Mucosa of descending colon (tissue), 3 donors: ENCODE measurements at regions of chr11 and their contacts with region 1.

Region 1: GRCh38 chr11:8092587-8093424 is 11.8 kb downstream of the TUB start:
- DNase-seq: peak in 2 of 3 donors; percentile 54 to 82
- ATAC-seq: peak; percentile 81
- H3K4me3 ChIP-seq: no peak overlapping the region
- H3K4me1 ChIP-seq: no peaks in the 10 kb centered on the region
- CTCF ChIP-seq: peak; percentile 36

Region 2: GRCh38 chr11:8018484-8019313 is 74.1 kb before region 1 on chr11:
- intact Hi-C with region 1: loop called in 1 of 2 experiments (anchors 5 kb)
- DNase-seq: peak; percentile 59 to 71 (median 66)
- ATAC-seq: peak; percentile 65
- H3K4me3 ChIP-seq: peak overlapping the region; percentile 14
- H3K4me1 ChIP-seq: no peaks in the 10 kb centered on the region
- CTCF ChIP-seq: no peak

Region 3: DNA sequence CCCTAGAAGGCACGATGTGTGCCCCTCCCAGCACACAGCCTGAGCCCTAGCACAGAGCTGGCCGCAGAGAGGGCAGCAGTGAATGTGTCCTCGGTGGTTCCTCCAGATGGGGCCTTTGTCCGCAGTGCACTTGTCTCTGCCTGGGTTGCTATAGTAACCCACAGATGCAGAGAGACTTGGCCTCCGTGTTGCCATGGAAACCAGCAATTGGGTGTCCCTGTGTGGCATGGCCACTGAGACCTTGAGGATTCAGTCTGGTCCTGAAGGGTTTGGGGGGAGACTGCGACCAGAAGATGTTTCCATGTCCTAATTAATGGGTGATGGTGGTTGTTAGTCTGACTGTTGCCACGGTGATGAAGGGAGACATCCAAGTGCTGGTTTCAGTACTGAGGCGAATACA is 54.4 kb before region 1 on chr11:
- intact Hi-C with region 1: loop called in 1 of 2 experiments (anchors 5 kb)
- DNase-seq: no peak
- ATAC-seq: no peak
- H3K4me3 ChIP-seq: no peak overlapping the region
- H3K4me1 ChIP-seq: no peaks in the 10 kb centered on the region
- CTCF ChIP-seq: no peak

Region 4: GRCh38 chr11:8168485-8169257 is 75.9 kb after region 1 on chr11 and contains the start of gene RIC3:
- intact Hi-C with region 1: no loop called
- DNase-seq: peak; percentile 7 to 47 (median 32)
- ATAC-seq: peak; percentile 59
- H3K4me3 ChIP-seq: no peak within 1 kb of the TSS
- H3K4me1 ChIP-seq: no peaks in the 10 kb centered on the region
- CTCF ChIP-seq: no peak
- total RNA-seq, gene RIC3: 1.5 to 16.4 (median 2.0) TPM